ENCODE measurements at regions of chr17 and their contacts with region 1.

Region 1: DNA sequence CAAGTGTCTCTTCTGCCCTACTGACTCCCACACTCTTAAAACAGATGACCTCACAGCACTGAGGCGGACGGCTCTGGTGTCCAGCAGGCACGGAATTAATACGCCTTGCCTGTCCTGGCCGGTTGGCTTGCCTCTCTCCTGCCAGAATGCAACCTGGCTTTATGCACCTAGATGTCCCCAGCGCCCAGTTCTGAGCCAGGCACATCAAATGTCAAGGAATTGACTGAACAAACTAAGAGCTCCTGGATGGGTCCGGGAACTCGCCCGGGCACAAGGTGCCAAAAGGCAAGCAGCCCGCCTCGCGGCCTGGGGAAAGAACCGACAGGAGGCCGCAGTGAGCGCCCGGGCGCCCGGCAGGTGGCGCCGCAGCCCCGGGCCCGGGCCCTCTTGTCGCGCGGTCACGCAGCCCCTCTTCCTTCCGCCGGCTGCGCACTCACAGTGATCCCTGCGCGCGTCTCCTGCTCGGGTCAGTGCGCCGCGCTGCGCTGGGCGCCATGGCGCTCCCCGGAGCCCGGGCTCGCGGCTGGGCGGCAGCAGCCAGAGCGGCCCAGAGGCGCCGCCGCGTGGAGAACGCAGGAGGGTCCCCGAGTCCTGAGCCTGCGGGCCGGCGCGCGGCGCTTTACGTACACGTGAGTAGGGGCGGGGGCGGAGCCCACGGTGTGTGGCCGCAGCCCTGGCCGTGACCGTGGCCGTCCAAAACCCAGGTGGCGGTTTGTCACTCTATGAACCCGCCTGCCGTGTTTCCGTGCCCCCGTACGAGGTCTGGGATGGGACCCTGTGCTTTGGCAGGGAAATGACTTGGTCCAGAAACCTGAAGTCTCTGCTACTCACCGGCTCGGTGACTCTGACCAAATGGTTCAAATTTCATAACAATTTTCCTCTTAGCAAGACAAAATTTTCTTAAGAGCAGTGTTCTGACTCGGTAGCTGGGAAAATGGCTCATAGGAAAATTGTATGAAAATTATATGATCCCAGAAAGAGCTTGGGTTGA is at the start of gene RSAD1:
- DNase-seq: peak; percentile 83
- H3K4me3 Mint-ChIP-seq: peak within 1 kb of the TSS; percentile 69
- H3K27ac Mint-ChIP-seq: peak within 1 kb of the TSS; percentile 75
- H3K4me1 Mint-ChIP-seq: peaks cover 25% of the 10 kb centered on the region
- H3K27me3 Mint-ChIP-seq: no peaks in the 10 kb centered on the region
- CTCF ChIP-seq: peak; percentile 81
- total RNA-seq, gene RSAD1: 25.2 and 28.7 TPM in 2 replicates

Region 2: GRCh38 chr17:50269477-50270434 is 208.9 kb before region 1 on chr17:
- CTCF ChIA-PET with region 1: no interaction called
- POLR2A ChIA-PET with region 1: no interaction called
- intact Hi-C with region 1: loop called (anchors 5 kb)
- DNase-seq: peak; percentile 74
- H3K4me3 Mint-ChIP-seq: no peak overlapping the region
- H3K27ac Mint-ChIP-seq: no peak overlapping the region
- H3K4me1 Mint-ChIP-seq: peaks cover 30% of the 10 kb centered on the region
- H3K27me3 Mint-ChIP-seq: no peaks in the 10 kb centered on the region
- CTCF ChIP-seq: peak; percentile 57

Region 3: DNA sequence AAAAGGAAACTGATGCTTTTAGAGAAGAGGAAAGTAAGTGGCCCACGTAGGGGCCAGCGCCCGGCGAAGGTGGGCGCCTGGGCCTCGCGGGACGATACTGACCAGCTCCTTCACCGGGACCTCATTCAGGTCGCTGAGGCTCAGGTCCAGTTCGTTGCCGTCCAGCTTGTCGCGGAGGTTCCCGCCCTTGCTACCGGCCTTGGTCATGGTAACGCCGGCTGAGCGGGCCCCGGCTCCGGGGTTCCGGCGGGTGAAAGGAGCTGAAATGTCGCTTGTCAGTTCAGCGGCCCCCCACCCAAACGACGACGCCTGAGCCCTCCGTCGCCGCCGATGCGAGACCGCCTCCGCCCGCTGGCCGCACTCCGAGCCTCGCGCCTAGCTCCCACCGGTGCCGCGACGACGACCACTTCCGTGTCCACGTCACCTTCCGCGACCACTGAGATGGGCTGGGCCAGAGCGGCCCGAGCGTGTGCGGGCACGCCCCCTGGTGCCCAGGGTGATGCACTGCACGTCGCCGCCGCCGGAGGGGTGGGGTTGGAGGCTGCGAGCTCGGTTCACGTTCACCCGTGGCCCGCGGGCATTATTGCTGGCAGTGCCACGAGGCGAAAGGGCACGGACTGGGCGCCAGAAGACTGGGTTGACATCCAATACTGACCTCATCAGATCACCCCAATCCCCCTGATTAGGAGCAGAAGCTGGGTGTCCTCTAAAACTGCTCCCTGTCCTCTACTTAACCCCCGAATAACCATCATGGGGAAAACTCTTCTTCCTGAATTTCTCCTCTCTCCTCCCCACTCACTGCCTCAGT is 81.4 kb before region 1 on chr17 and contains the start of gene LRRC59:
- CTCF ChIA-PET with region 1: interaction called, 24 read pairs
- POLR2A ChIA-PET with region 1: interaction called, 42 read pairs
- intact Hi-C with region 1: loop called (anchors 1 kb)
- DNase-seq: peak; percentile 82
- H3K4me3 Mint-ChIP-seq: peak within 1 kb of the TSS; percentile 96
- H3K27ac Mint-ChIP-seq: peak within 1 kb of the TSS; percentile 90
- H3K4me1 Mint-ChIP-seq: peaks cover 20% of the 10 kb centered on the region
- H3K27me3 Mint-ChIP-seq: no peaks in the 10 kb centered on the region
- CTCF ChIP-seq: peak; percentile 96
- total RNA-seq, gene LRRC59: 306 and 344 TPM in 2 replicates

Region 4: DNA sequence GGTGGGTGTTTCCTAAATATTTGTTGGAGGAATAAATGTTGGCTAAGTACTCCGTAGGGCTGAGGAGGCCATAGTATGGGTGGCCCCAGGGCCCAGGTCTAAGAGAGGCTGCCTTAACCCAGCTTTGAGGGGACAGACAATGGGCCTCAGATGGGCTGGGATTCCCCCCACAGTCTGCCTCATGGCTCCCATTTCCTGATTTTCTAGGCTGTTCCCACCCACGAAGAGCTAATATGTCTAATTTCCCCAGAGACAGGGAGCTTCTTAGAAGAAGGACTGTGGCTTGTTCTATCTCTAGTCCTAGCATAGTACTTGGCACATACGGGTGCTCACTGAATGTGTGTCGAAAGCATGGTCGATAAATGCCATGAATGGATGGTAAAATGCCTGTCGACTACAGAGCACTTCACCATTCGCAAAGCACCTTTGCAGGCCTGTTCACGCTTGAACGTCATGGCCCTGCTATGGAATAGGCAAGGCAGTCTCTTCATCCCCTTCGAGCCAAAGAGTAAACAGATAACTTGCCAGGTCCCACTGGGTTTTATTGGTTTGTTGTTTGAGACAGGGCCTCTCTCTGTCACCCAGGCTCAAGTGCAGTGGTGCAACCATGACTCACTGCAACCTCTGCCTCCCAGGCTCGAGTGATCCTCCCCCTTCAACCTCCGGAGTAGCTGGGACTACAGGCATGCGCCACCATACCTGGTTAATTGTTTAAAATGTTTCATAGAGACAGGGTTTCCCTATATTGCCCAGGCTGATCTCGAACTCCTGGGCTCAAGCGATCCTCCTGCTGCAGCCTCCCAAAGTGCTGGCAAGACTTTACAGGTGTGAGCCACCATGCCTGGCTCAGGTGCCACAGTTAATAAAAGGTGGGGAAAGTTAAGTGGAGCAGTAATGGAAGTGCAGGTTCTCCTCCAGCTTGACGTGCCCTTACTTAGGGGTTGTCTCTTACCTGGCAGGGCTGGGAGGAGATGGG is 19.7 kb before region 1 on chr17:
- CTCF ChIA-PET with region 1: interaction called, 4 read pairs
- POLR2A ChIA-PET with region 1: interaction called, 13 read pairs
- intact Hi-C with region 1: no loop called
- DNase-seq: peak; percentile 90
- H3K4me3 Mint-ChIP-seq: no peak overlapping the region
- H3K27ac Mint-ChIP-seq: no peak overlapping the region
- H3K4me1 Mint-ChIP-seq: peaks cover 8% of the 10 kb centered on the region
- H3K27me3 Mint-ChIP-seq: no peaks in the 10 kb centered on the region
- CTCF ChIP-seq: no peak

Region 5: GRCh38 chr17:50547035-50547735 is 68.5 kb after region 1 on chr17 and contains the start of gene SPATA20:
- CTCF ChIA-PET with region 1: interaction called, 7 read pairs
- POLR2A ChIA-PET with region 1: interaction called, 59 read pairs
- intact Hi-C with region 1: loop called (anchors 1 kb)
- DNase-seq: peak; percentile 89
- H3K4me3 Mint-ChIP-seq: peak within 1 kb of the TSS; percentile 79
- H3K27ac Mint-ChIP-seq: no peak within 1 kb of the TSS
- H3K4me1 Mint-ChIP-seq: peaks cover 17% of the 10 kb centered on the region
- H3K27me3 Mint-ChIP-seq: no peaks in the 10 kb centered on the region
- CTCF ChIP-seq: peak; percentile 99
- total RNA-seq, gene SPATA20: 35.3 and 39.4 TPM in 2 replicates